Activated naive CD4-positive, alpha-beta T cell treated with anti-CD3 and anti-CD28 coated beads for 36 hours (primary cell): ENCODE measurements at regions of chr2 and their contacts with region 1.

Region 1: DNA sequence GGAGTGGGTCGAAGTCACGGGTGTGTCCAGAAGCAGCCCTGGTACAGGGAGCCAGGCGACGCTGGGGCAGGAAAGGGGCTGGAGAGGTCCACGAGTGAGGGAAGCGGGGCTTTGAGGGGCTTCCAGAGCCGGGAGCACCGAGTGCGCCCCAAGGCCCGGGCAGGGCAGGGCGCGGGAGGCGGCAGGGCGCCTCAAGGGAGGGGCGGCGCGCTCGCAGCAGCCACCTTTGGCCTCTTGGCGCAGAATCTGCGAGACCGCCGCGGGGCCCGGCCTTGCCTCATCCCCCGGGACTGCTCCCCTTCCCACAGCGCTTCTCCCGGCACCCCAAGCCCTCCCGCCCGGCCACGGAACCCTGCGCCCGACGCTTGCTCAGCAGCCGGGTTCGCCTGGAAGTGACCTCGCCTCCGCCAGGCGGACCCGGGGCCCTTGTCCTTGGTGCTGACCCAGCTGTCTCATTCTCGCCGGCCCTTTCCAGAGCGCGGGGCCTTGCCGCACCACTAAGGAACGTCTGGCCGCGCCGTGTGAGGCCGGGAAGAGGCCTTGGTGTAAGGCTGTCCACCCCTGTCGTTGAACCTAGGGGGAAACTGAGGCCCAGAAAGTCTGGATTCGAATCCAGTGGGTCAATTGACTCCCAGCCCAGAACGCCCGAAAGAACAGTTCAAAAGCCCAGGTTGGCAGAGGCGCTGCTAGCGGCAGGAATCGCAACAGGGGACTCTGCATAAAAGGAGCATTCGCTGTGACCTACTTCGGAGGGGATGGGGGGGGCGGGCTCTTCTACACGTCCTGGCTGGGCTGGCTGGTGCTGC is 584 bp upstream of the DNER start:
- DNase-seq: peak; percentile 52
- H3K4me3 Mint-ChIP-seq: peak overlapping the region; percentile 42
- H3K27ac Mint-ChIP-seq: no peak overlapping the region
- H3K4me1 Mint-ChIP-seq: peaks cover 11% of the 10 kb centered on the region
- H3K27me3 Mint-ChIP-seq: peaks cover 59% of the 10 kb centered on the region

Region 2: GRCh38 chr2:227890495-227891079 is 1824.4 kb before region 1 on chr2:
- CTCF ChIA-PET with region 1: no interaction called
- intact Hi-C with region 1: loop called (anchors 5 kb)
- DNase-seq: no peak
- H3K4me3 Mint-ChIP-seq: no peak overlapping the region
- H3K27ac Mint-ChIP-seq: no peak overlapping the region
- H3K4me1 Mint-ChIP-seq: no peaks in the 10 kb centered on the region
- H3K27me3 Mint-ChIP-seq: peaks cover 2% of the 10 kb centered on the region

Region 3: DNA sequence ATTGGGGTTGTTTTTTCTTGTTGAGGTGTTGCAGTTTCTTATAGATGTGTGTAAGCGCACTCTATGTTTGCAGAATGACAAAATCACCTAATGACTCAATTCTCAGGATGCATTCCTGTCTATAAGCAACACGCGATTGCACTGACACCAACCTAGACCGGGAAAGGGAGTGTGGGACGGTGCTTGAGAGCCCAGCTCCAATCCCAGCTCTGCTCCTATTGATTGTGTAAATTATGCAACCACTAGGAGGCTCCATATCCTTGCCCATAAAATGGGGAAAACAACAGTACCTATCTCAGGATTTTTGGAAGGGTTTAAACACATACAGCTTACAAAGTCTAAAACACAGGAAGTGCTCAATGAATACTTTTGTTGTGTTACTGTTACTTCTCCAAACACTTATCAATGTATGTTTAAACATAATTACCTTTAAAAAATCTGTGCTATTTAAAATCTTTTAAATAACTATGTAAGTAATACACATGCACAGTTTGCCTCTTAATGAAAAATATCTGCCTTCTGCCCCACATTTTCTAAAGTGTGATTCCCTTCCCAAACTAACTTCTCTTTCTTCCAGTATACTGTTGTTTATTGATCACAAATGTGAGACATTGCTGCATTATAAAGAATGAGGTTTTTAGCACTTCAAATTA is 1666.0 kb before region 1 on chr2:
- CTCF ChIA-PET with region 1: interaction called, 3 read pairs
- intact Hi-C with region 1: loop called (anchors 10 kb)
- DNase-seq: peak; percentile 4
- H3K4me3 Mint-ChIP-seq: no peak overlapping the region
- H3K27ac Mint-ChIP-seq: no peak overlapping the region
- H3K4me1 Mint-ChIP-seq: no peaks in the 10 kb centered on the region
- H3K27me3 Mint-ChIP-seq: no peaks in the 10 kb centered on the region

Region 4: DNA sequence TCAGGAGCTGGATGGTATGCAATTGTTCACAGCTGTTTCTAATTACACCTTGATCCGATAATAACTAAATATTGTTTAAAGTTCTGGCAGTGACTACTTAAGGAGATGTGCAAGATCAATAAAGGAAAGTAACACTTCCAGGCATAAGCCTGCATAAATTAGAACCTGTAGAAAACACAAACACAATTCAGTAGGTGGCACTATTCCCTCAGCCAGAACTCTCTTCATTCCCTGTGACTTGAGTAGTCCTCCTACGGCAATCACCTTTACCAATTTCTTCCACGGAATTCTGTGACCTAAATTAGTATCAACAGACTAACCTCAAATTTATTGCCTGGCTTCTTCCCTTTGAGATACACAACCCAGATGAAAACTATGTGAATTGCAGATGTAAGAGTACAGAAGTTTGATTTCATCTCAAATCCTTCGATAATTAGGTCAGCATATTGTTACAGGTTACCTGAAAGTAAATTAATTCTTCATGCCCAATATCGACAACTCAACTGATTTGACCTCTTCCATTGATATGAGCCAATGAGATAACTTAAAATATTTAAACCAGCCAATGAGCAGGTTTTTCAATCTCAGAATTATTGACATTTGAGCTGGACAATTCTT is 581.7 kb before region 1 on chr2:
- CTCF ChIA-PET with region 1: no interaction called
- intact Hi-C with region 1: loop called (anchors 10 kb)
- DNase-seq: no peak
- H3K4me3 Mint-ChIP-seq: no peak overlapping the region
- H3K27ac Mint-ChIP-seq: no peak overlapping the region
- H3K4me1 Mint-ChIP-seq: no peaks in the 10 kb centered on the region
- H3K27me3 Mint-ChIP-seq: no peaks in the 10 kb centered on the region

Region 5: DNA sequence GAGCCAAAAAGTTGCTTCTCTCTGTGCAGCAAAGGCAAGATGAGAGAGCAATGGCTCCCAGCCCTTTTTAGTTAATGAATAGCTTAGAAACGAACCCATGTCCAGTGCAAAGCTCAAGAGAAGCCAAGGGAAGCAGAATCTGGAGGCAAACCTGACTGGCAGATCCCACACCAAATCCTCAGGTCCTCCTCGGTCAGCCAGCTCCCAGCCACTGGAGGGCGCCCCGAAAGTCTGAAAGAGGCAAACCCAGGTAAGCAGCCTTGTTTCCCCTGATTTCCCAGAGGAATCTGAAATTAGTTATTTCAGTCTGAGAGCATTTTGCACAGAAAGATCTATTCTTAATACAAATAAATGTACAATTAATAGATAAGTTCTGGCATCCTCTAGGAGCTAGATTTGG is 372.6 kb before region 1 on chr2:
- CTCF ChIA-PET with region 1: no interaction called
- intact Hi-C with region 1: loop called (anchors 10 kb)
- DNase-seq: peak; percentile 15
- H3K4me3 Mint-ChIP-seq: no peak overlapping the region
- H3K27ac Mint-ChIP-seq: no peak overlapping the region
- H3K4me1 Mint-ChIP-seq: no peaks in the 10 kb centered on the region
- H3K27me3 Mint-ChIP-seq: no peaks in the 10 kb centered on the region

Region 6: DNA sequence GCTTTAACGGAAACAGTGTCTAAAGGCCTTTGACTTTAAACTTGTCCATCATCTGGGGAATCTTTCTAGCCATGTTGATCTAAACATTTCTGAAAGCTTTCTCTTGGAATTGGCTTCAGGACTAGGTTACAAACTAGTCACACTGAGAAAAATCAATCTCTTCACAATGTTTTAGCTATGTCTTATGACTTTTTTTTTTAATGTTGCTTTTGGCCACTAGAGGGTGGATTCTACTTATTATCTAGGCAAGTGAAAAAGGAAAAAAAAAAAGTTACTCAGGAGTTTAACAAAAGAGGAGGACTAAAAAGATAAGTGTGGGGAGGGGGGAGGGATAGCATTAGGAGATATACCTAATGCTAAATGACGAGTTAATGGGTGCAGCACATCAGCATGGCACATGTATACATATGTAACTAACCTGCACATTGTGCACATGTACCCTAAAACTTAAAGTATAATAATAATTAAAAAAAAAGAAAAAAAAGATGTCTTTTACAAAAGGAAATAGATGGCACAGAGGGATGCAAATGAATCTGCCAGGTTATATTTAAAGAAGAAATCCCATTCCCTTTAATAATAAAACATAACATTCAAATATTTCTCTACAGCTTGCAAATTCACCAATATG is 283.5 kb before region 1 on chr2:
- CTCF ChIA-PET with region 1: no interaction called
- intact Hi-C with region 1: loop called (anchors 5 kb)
- DNase-seq: no peak
- H3K4me3 Mint-ChIP-seq: no peak overlapping the region
- H3K27ac Mint-ChIP-seq: no peak overlapping the region
- H3K4me1 Mint-ChIP-seq: no peaks in the 10 kb centered on the region
- H3K27me3 Mint-ChIP-seq: no peaks in the 10 kb centered on the region